ENCODE measurements at regions of chr10 and their contacts with region 1.

Region 1: GRCh38 chr10:95290461-95291364 is at the start of gene PDLIM1:
- DNase-seq: peak; percentile 59 to 79
- H3K4me3 ChIP-seq: peak within 1 kb of the TSS; percentile 69 to 98 (median 96)
- H3K27ac ChIP-seq: peak within 1 kb of the TSS; percentile 92 to 96
- H3K4me1 ChIP-seq: peaks cover 0 to 8% of the 10 kb centered on the region in 2 donors
- H3K27me3 ChIP-seq: no peaks in the 10 kb centered on the region
- CTCF ChIP-seq: peak in 2 of 3 donors; percentile 22 to 61
- POLR2A ChIP-seq: peak; percentile 56
- total RNA-seq, gene PDLIM1: 80.8 to 143 (median 87.7) TPM

Region 2: GRCh38 chr10:94133239-94133638 is 1157.5 kb before region 1 on chr10:
- intact Hi-C with region 1: loop called (anchors 5 kb)
- DNase-seq: peak; percentile 75 to 92
- H3K4me3 ChIP-seq: no peak overlapping the region
- H3K27ac ChIP-seq: no peak overlapping the region
- H3K4me1 ChIP-seq: no peaks in the 10 kb centered on the region
- H3K27me3 ChIP-seq: no peaks in the 10 kb centered on the region
- CTCF ChIP-seq: no peak
- POLR2A ChIP-seq: no peak

Region 3: DNA sequence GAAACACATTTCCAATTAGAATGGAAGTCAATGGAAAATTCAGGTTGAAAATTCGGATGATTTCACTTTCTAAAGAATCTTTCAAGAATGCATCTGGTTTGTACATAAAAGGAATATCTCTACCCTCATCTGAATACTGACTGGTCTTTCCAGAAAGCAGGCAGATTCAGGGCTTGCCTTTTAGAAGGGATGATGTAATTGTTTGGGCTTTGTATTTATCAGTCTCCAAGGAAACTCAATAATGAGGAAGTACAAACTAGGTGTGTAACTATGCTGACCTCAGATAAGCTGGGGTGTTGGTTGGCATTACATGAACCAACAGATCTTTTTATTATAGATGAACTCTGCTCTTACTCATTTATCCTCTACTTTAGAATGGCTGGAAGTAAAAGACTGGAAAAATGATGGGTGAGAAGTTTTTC is 24.0 kb before region 1 on chr10:
- intact Hi-C with region 1: no loop called
- DNase-seq: no peak
- H3K4me3 ChIP-seq: no peak overlapping the region
- H3K27ac ChIP-seq: peak overlapping the region; percentile 74 to 80
- H3K4me1 ChIP-seq: peaks cover 8 to 9% of the 10 kb centered on the region in 2 donors
- H3K27me3 ChIP-seq: no peaks in the 10 kb centered on the region
- CTCF ChIP-seq: no peak
- POLR2A ChIP-seq: no peak

Measured in breast epithelium (tissue), 4 donors.